SK-N-SH (cell line): ENCODE measurements at regions of chr5 and their contacts with region 1.

Region 1: GRCh38 chr5:36695677-36696673 is 89.6 kb downstream of the SLC1A3 start:
- DNase-seq: peak; percentile 59
- H3K4me3 ChIP-seq: peak overlapping the region in 1 of 2 experiments; percentile 8; a peak in 1 of 4 replicates
- H3K27ac ChIP-seq: no peak overlapping the region
- H3K4me1 ChIP-seq: no peaks in the 10 kb centered on the region; a peak in 1 of 4 replicates
- H3K27me3 ChIP-seq: peaks cover 20% of the 10 kb centered on the region; the same call in 1 of the 2 replicates
- CTCF ChIP-seq: peak; percentile 67
- EP300 ChIP-seq: no peak
- RAD21 ChIP-seq: peak; percentile 66

Region 2: GRCh38 chr5:35789732-35790456 is 906.1 kb before region 1 on chr5:
- CTCF ChIA-PET with region 1: no interaction called
- POLR2A ChIA-PET with region 1: no interaction called
- DNase-seq: no peak
- H3K4me3 ChIP-seq: no peak overlapping the region
- H3K27ac ChIP-seq: no peak overlapping the region
- H3K4me1 ChIP-seq: 0 out of 4 replicates have a peak, but pooled peaks cover 0 to 6% of the 10 kb centered on the region in 2 experiments
- H3K27me3 ChIP-seq: no peaks in the 10 kb centered on the region
- CTCF ChIP-seq: no peak
- EP300 ChIP-seq: no peak
- RAD21 ChIP-seq: no peak

Region 3: DNA sequence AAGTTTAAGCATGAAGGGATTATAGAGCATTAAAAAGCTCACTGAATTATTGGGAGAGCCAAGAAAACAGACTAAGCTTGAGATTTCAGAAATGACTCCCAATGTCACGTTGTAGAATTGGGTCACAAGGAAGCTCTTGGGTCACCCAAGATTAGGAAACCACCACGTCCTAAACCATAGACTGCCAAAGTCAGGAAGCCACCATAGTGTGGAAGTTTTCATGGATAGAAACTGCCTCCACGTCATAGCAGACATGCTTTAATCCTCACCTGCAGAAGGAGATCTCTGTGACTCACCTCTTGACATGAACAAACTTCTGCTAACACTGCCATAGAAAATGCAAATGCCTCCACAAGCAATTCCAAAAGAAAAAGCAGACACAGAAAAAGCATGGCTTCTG is 16.7 kb after region 1 on chr5:
- CTCF ChIA-PET with region 1: interaction called, 26 read pairs
- POLR2A ChIA-PET with region 1: no interaction called
- DNase-seq: no peak
- H3K4me3 ChIP-seq: no peak overlapping the region
- H3K27ac ChIP-seq: no peak overlapping the region
- H3K4me1 ChIP-seq: no peaks in the 10 kb centered on the region
- H3K27me3 ChIP-seq: peaks cover 17% of the 10 kb centered on the region
- CTCF ChIP-seq: no peak
- EP300 ChIP-seq: no peak
- RAD21 ChIP-seq: no peak